Activated naive CD4-positive, alpha-beta T cell treated with anti-CD3 and anti-CD28 coated beads, Interleukin-2, amount 10 ng/mL, durations not matched to agents 7 days and 5 days (primary cell): ENCODE measurements at regions of chr2 and their contacts with region 1.

Region 1: GRCh38 chr2:31333527-31334183 is 80.9 kb downstream of the XDH start:
- DNase-seq: peak; percentile 88
- H3K4me3 Mint-ChIP-seq: no peak overlapping the region
- H3K27ac Mint-ChIP-seq: no peak overlapping the region
- H3K4me1 Mint-ChIP-seq: no peaks in the 10 kb centered on the region
- H3K27me3 Mint-ChIP-seq: peaks cover 39% of the 10 kb centered on the region

Region 2: DNA sequence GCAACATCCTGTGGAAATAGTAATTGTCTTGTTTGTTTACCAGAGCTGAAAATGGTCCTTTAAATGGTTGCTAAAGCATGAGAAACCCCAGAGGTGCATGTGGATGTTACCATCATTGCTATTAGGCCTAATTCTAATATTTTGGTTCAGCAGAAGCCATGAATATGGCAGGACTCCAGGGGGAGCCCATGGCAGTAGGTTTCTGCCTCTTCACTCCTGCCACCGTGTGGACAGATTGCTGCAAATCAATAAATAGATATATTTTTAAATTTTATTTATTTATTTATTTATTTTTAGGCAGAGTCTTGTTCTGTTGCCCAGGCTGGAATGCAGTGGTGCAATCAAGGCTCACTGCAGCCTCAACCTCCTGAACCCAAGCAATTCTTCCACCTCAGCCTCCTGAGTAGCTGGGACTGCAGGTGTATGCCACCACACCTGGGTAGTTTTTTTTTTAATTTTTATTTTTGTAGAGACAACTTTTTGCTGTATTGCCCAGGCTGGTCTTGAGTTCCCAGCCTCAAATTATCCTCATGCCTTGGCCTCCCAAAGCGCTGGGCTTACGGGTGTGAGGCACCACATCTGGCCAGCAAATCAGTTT is 471.5 kb before region 1 on chr2:
- CTCF ChIA-PET with region 1: interaction called, 15 read pairs
- DNase-seq: peak; percentile 61
- H3K4me3 Mint-ChIP-seq: no peak overlapping the region
- H3K27ac Mint-ChIP-seq: no peak overlapping the region
- H3K4me1 Mint-ChIP-seq: peaks cover 13% of the 10 kb centered on the region
- H3K27me3 Mint-ChIP-seq: peaks cover 22% of the 10 kb centered on the region

Region 3: GRCh38 chr2:31233741-31234682 is 99.6 kb before region 1 on chr2 and contains the start of gene EHD3:
- CTCF ChIA-PET with region 1: interaction called, 13 read pairs
- DNase-seq: peak; percentile 84
- H3K4me3 Mint-ChIP-seq: peak within 1 kb of the TSS; percentile 62
- H3K27ac Mint-ChIP-seq: peak within 1 kb of the TSS; percentile 58
- H3K4me1 Mint-ChIP-seq: peaks cover 15% of the 10 kb centered on the region
- H3K27me3 Mint-ChIP-seq: peaks cover 16% of the 10 kb centered on the region

Region 4: GRCh38 chr2:31483246-31483645 is 149.6 kb after region 1 on chr2:
- CTCF ChIA-PET with region 1: no interaction called
- DNase-seq: no peak
- H3K4me3 Mint-ChIP-seq: no peak overlapping the region
- H3K27ac Mint-ChIP-seq: no peak overlapping the region
- H3K4me1 Mint-ChIP-seq: no peaks in the 10 kb centered on the region
- H3K27me3 Mint-ChIP-seq: peaks cover 8% of the 10 kb centered on the region